SK-N-SH (cell line): ENCODE measurements at regions of chr18 and their contacts with region 1.

Region 1: GRCh38 chr18:79378542-79379250 is 17.0 kb upstream of the NFATC1 start:
- DNase-seq: peak; percentile 67
- H3K4me3 ChIP-seq: peak overlapping the region in 1 of 2 experiments; percentile 41; a peak in 1 of 4 replicates
- H3K27ac ChIP-seq: no peak overlapping the region
- H3K4me1 ChIP-seq: no peaks in the 10 kb centered on the region
- H3K27me3 ChIP-seq: peaks cover 16% of the 10 kb centered on the region
- CTCF ChIP-seq: peak; percentile 42
- EP300 ChIP-seq: no peak
- RAD21 ChIP-seq: no peak

Region 2: GRCh38 chr18:79366177-79367094 is 12.3 kb before region 1 on chr18:
- CTCF ChIA-PET with region 1: interaction called, 12 read pairs
- POLR2A ChIA-PET with region 1: no interaction called
- DNase-seq: peak; percentile 49
- H3K4me3 ChIP-seq: no peak overlapping the region
- H3K27ac ChIP-seq: peak overlapping the region in 1 of 2 experiments; percentile 11; a peak in 1 of 4 replicates
- H3K4me1 ChIP-seq: peaks cover 0 to 23% of the 10 kb centered on the region in 2 experiments; a peak in 1 of 4 replicates
- H3K27me3 ChIP-seq: no peaks in the 10 kb centered on the region
- CTCF ChIP-seq: no peak
- EP300 ChIP-seq: no peak
- RAD21 ChIP-seq: no peak

Region 3: DNA sequence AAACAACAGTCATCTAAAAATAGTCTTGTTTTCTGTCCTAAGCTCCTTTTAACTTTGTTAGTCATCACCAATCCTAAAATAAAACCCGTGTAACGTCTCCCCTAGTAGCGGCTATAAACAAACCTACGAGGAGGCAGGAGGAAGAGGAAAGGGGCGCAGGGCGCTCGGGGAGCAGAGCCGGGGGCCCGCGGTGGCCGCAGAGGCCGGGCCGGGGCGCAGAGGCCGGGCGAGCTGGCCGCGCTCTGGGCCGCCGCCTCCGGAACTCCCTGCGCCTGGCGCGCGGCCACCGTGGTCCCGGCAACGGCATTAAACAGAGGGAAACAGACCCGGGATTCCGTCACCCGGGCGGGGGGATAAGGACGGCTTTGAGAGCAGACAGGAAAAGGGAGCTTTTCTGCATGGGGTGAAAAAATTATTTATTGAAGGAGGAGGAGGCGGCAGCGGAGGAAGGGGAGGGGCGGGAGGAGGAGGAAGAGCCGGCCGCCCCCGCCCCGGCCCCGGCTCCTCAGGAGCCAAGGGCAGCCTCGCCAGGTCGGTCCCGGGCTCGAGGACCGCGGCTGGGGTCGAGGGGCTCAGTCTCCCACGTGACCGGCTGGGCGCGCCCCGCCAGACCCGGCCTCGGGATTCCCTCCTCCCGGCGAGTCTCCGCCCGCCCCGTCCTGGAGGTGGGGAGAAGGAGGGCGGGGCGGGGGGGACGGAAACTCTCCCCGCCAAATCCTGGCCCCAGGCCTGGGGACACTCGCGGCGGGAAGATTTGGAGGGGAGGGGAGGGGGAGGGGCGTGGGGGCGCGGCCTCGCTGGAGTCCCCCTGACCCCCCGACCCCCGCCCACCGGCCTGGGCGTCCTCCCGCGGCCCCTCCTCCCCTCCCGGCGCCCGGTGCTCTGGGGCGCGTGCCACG is 15.2 kb after region 1 on chr18:
- CTCF ChIA-PET with region 1: interaction called, 32 read pairs
- POLR2A ChIA-PET with region 1: no interaction called
- DNase-seq: peak; percentile 83
- H3K4me3 ChIP-seq: peak overlapping the region in 1 of 2 experiments; percentile 23; a peak in 2 of 4 replicates
- H3K27ac ChIP-seq: no peak overlapping the region
- H3K4me1 ChIP-seq: no peaks in the 10 kb centered on the region; a peak in 1 of 4 replicates
- H3K27me3 ChIP-seq: peaks cover 76% of the 10 kb centered on the region
- CTCF ChIP-seq: no peak
- EP300 ChIP-seq: no peak
- RAD21 ChIP-seq: no peak

Region 4: DNA sequence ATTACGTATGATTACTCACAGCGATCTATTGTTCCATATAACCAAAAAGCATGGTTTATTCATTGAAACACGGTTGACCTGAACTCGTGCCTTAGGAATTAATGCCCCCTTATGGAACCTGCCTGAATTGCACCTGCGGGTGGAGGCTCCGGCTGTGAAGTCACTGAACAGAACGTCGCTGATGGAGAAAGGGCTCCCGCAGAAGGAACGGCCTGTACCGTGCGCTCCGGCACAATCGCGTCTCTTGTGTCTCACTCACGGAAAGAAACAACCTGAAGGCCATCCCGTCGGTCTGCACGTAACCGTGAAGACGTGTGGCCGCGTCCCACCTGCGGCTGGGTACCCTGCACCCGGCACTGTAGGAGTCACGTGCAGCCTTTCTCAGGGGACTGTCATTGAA is 150.2 kb after region 1 on chr18:
- CTCF ChIA-PET with region 1: interaction called, 21 read pairs
- POLR2A ChIA-PET with region 1: no interaction called
- DNase-seq: peak; percentile 84
- H3K4me3 ChIP-seq: no peak overlapping the region
- H3K27ac ChIP-seq: no peak overlapping the region
- H3K4me1 ChIP-seq: no peaks in the 10 kb centered on the region
- H3K27me3 ChIP-seq: peaks cover 89% of the 10 kb centered on the region
- CTCF ChIP-seq: peak; percentile 82
- EP300 ChIP-seq: no peak
- RAD21 ChIP-seq: peak; percentile 81

Region 5: DNA sequence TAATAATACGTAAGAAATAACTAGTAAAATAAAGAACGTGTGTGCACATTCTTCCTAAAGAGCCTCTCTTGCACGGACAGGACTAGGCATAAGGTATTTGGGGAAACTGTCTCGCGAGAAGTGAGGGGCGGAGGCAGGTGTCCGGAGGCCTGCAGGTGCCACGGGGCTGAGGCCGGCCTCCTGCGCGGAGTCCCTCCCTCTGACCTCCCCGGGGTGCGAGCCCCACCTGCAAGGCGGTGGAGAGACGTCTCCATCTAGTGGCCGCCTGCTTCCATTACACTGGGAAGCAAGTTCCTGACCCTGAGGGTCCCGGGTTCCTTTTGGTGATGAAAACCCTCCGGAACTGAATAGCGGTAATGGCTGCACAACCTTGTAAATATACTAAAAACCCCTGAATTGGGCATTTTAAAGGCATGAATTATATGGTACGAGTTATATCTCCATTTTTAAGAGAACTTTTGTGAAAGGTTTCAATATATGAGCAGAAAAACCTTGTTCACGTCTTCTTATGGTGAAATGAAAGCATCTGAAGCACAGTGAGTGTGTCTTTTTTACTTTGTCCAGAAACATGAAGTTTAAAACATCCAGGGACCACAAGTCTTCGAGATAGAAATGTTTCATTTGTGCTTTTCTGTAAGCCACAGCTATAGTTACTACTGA is 265.4 kb after region 1 on chr18:
- CTCF ChIA-PET with region 1: interaction called, 41 read pairs
- POLR2A ChIA-PET with region 1: no interaction called
- DNase-seq: peak; percentile 93
- H3K4me3 ChIP-seq: no peak overlapping the region; a peak in 1 of 4 replicates
- H3K27ac ChIP-seq: no peak overlapping the region
- H3K4me1 ChIP-seq: no peaks in the 10 kb centered on the region; a peak in 1 of 4 replicates
- H3K27me3 ChIP-seq: peaks cover 71% of the 10 kb centered on the region
- CTCF ChIP-seq: peak; percentile 93
- EP300 ChIP-seq: no peak
- RAD21 ChIP-seq: peak; percentile 82

Region 6: DNA sequence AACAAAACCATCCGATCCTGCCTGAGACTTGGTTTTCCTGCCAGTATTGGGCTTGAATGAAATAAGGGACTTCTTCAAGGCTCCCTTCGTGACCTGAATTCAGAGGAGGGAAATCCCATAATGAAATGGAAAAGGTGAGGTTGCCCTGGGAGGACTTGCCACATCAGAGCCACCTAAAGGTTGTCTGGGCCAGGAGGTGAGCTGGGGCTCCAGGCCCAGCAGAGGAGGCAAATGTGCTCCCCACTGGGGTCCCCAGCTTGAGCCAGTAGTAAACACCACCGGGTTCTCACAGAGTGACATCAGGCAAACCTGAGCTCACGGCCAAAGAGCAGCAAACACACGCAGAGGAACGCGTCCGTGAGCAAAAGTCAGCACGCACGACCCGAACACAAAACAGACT is 272.3 kb after region 1 on chr18:
- CTCF ChIA-PET with region 1: interaction called, 10 read pairs
- POLR2A ChIA-PET with region 1: no interaction called
- DNase-seq: no peak
- H3K4me3 ChIP-seq: no peak overlapping the region
- H3K27ac ChIP-seq: no peak overlapping the region
- H3K4me1 ChIP-seq: no peaks in the 10 kb centered on the region
- H3K27me3 ChIP-seq: peaks cover 46% of the 10 kb centered on the region
- CTCF ChIP-seq: no peak
- EP300 ChIP-seq: no peak
- RAD21 ChIP-seq: no peak